ENCODE measurements at regions of chr3 and their contacts with region 1.

Region 1: GRCh38 chr3:172673210-172673679 is 37.6 kb downstream of the NCEH1 start:
- DNase-seq: peak; percentile 78
- H3K4me3 Mint-ChIP-seq: no peak overlapping the region
- H3K27ac Mint-ChIP-seq: no peak overlapping the region
- H3K4me1 Mint-ChIP-seq: peaks cover 20% of the 10 kb centered on the region
- H3K27me3 Mint-ChIP-seq: no peaks in the 10 kb centered on the region

Region 2: DNA sequence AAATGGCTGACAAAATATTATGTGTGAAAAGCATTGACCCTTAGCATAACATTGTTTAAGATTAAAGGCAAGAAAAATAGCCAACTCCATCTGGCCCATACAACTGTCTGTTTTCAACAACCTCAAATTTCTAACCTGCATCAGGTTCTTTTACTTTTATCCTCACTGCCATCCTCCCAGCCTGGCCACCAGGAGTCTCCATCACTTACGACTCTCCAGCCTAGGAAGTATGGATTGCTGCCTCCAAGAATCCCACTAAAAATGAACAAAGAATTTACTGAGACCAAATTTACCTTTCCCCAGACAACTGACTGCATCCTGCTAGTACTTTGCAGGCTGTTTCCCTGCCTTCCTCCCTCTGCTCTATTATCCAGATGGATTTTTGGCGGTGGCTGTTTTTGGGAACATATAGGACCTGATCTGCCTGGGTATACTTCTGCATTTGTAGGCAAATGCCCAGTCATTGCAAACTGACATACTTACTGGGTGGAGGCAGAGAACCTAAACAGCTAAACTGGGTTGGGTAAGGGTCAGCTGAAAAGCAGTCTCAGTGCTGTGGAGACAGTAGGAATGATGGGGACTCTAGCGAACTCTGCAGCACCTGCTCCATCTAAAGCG is 369.2 kb before region 1 on chr3:
- CTCF ChIA-PET with region 1: no interaction called
- POLR2A ChIA-PET with region 1: no interaction called
- DNase-seq: no peak
- H3K4me3 Mint-ChIP-seq: no peak overlapping the region
- H3K27ac Mint-ChIP-seq: no peak overlapping the region
- H3K4me1 Mint-ChIP-seq: no peaks in the 10 kb centered on the region
- H3K27me3 Mint-ChIP-seq: no peaks in the 10 kb centered on the region

Region 3: GRCh38 chr3:172317984-172318383 is 355.3 kb before region 1 on chr3:
- CTCF ChIA-PET with region 1: no interaction called
- POLR2A ChIA-PET with region 1: no interaction called
- DNase-seq: no peak
- H3K4me3 Mint-ChIP-seq: no peak overlapping the region
- H3K27ac Mint-ChIP-seq: no peak overlapping the region
- H3K4me1 Mint-ChIP-seq: peaks cover 13% of the 10 kb centered on the region
- H3K27me3 Mint-ChIP-seq: no peaks in the 10 kb centered on the region

Region 4: GRCh38 chr3:172332256-172333041 is 340.8 kb before region 1 on chr3:
- CTCF ChIA-PET with region 1: interaction called, 38 read pairs
- POLR2A ChIA-PET with region 1: no interaction called
- DNase-seq: peak; percentile 55
- H3K4me3 Mint-ChIP-seq: no peak overlapping the region
- H3K27ac Mint-ChIP-seq: no peak overlapping the region
- H3K4me1 Mint-ChIP-seq: peaks cover 10% of the 10 kb centered on the region
- H3K27me3 Mint-ChIP-seq: no peaks in the 10 kb centered on the region

Region 5: DNA sequence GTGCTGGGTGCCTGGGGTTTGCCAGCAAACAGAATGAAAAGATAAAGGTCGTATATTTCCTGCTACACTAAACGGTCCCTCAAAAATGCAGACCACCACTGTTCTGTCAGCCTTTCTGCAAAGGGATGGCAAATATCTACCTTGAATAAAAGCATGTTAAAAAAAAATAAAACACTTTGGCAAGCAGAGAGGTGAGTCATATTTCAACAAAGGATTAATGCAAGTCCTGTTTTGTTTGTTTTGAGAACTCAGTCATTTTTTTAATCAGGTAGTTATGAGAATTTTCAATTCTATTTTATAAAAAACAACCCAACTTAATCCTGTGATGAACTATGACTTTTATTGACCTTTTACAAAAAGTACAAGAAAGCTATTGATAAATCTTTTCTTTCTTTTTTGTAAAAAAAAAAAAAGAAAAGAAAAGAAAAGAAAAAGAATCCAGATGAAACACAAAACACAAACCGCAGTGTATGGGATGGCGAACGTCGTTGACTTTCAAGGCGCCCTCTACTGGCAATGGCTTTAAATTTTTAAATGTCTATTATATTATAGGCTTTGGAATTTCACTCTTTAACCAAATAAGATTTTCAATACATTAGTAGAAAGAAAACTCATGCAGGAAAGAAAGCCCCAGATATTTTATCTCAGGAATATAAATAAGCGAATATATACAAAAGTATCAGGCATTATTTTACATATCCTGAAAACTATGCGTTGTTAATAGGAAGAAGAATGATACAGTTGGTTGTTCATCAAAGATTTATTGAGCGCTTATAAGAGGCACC is 50.1 kb before region 1 on chr3:
- CTCF ChIA-PET with region 1: interaction called, 11 read pairs
- POLR2A ChIA-PET with region 1: no interaction called
- DNase-seq: peak; percentile 37
- H3K4me3 Mint-ChIP-seq: no peak overlapping the region
- H3K27ac Mint-ChIP-seq: no peak overlapping the region
- H3K4me1 Mint-ChIP-seq: peaks cover 4% of the 10 kb centered on the region
- H3K27me3 Mint-ChIP-seq: no peaks in the 10 kb centered on the region

Region 6: GRCh38 chr3:172685346-172686214 is 12.3 kb after region 1 on chr3:
- CTCF ChIA-PET with region 1: interaction called, 45 read pairs
- POLR2A ChIA-PET with region 1: no interaction called
- DNase-seq: no peak
- H3K4me3 Mint-ChIP-seq: peak overlapping the region; percentile 1
- H3K27ac Mint-ChIP-seq: peak overlapping the region; percentile 63
- H3K4me1 Mint-ChIP-seq: peaks cover 32% of the 10 kb centered on the region
- H3K27me3 Mint-ChIP-seq: no peaks in the 10 kb centered on the region

Region 7: DNA sequence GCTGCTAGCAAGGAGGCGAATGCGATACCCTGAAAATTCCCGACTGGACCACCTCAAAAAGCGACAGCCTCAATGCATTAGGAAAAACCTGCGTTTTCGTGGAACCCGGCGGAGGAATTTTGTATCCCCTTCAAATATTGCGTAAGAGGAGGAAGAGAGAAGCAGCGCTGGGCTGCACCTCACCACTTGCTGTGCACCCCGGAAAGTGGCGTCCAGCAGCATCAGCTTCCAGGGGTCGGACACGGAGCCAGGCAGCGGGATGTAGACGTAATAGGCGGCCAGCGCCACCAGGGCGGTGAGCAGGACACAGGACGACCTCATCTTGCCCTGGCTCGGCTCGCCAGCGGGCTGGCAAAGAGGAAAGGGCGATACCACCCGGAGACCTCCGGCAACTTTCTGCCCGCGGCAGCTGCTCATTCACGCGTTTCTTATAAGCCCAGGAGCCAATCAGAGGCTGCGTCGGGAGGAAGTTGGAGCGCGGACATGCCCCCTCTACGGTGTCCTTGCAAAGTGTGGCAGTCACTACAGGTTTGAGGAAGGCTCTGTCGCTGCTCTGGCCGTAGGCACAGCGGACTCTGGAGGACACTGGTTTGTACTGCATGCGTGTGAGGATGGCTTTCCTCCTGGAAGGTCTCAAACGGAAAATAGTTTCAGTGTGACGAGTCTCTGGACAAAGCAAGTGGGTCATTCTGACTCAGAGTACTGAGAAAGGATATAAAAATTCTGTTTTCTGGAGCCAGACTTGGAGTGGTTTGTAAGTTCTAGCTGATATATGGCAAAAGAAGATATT is 37.6 kb after region 1 on chr3 and contains the start of gene NCEH1:
- CTCF ChIA-PET with region 1: interaction called, 48 read pairs
- POLR2A ChIA-PET with region 1: no interaction called
- DNase-seq: peak; percentile 83
- H3K4me3 Mint-ChIP-seq: peak within 1 kb of the TSS; percentile 95
- H3K27ac Mint-ChIP-seq: peak within 1 kb of the TSS; percentile 66
- H3K4me1 Mint-ChIP-seq: peaks cover 28% of the 10 kb centered on the region
- H3K27me3 Mint-ChIP-seq: peaks cover 4% of the 10 kb centered on the region
- total RNA-seq, gene NCEH1: 7.2 to 9.6 TPM

Region 8: DNA sequence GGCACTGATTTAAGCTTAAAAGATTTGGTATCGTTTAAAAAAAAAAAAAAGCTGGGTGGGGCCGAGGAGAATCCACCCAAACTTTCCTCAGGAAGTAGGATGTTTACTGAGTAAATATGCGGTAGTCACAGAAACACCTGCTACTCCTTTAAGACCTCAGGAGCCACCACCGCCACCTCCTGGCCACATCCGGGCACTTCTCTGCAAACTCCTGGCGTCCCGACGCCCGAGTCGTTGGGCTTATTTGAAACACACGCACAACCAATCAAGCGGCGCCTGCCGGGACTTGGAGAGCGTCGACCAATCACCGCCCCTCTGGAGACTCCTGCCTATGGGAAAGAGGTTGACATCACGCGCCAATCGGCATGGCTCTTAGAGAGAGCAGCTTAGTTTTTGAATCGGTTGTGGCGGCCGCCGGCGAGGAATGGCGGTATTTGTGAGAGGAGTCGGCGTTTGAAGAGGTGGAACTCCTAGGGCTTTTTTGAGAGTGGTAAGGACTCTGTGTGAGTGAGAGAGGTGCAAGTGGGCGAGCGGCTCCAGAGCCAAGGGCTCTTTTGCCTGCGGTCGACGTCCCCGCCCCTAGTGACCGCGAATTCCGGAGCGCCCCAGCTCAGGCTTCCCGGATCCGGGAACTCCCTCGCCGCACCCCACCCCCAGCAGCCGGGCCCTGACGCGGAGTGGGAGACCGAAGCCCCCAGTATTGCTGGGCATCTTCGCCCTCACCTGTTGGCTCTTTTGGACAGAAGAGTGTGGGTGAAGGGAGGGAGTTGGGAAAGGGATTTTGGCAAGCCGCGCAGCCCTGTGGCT is 77.3 kb after region 1 on chr3 and contains the start of gene ECT2:
- CTCF ChIA-PET with region 1: interaction called, 29 read pairs
- POLR2A ChIA-PET with region 1: interaction called, 8 read pairs
- DNase-seq: peak; percentile 99
- H3K4me3 Mint-ChIP-seq: peak within 1 kb of the TSS; percentile 94
- H3K27ac Mint-ChIP-seq: peak within 1 kb of the TSS; percentile 94
- H3K4me1 Mint-ChIP-seq: peaks cover 41% of the 10 kb centered on the region
- H3K27me3 Mint-ChIP-seq: peaks cover 8% of the 10 kb centered on the region
- total RNA-seq, gene ECT2: 67.7 to 68.8 TPM